ENCODE measurements at regions of chr4 and their contacts with region 1.

Region 1: GRCh38 chr4:48085821-48086607 is 48.0 kb downstream of the TXK start:
- DNase-seq: no peak
- H3K4me3 Mint-ChIP-seq: no peak overlapping the region
- H3K27ac Mint-ChIP-seq: no peak overlapping the region
- H3K4me1 Mint-ChIP-seq: peaks cover 5% of the 10 kb centered on the region
- H3K27me3 Mint-ChIP-seq: no peaks in the 10 kb centered on the region

Region 2: GRCh38 chr4:47686294-47686872 is 399.6 kb before region 1 on chr4:
- CTCF ChIA-PET with region 1: interaction called, 5 read pairs
- POLR2A ChIA-PET with region 1: no interaction called
- intact Hi-C with region 1: loop called (anchors 5 kb)
- DNase-seq: peak; percentile 81
- H3K4me3 Mint-ChIP-seq: no peak overlapping the region
- H3K27ac Mint-ChIP-seq: no peak overlapping the region
- H3K4me1 Mint-ChIP-seq: peaks cover 2% of the 10 kb centered on the region
- H3K27me3 Mint-ChIP-seq: peaks cover 8% of the 10 kb centered on the region

Region 3: DNA sequence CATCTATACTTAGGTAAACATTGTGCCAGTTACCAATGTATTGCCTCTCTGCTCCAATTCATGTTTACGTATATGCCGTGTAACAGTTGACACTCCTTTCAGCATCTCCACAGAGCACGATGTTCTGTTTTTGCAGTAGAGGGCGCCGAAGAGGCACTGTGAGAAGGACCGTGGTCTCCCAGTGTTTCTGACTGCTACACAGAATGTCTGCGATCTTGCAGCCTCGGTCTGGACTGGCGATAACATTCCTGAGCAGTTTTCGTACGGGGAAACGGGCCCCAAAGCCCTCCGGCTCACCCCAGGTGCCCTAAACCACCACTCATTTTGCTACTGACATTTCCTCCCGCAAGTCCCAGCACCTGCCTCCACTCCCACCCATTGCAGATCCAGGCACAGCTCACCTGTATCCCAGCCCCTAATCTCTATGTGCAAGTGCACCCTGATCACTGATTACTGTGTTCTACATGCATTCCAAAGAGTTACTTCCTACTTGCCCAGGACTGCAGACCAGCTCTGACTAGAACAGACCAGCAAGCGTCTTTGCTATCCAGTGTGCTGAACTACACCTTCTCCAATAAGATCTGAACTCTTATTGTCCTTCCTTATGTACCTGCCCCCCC is 159.3 kb before region 1 on chr4:
- CTCF ChIA-PET with region 1: interaction called, 5 read pairs
- POLR2A ChIA-PET with region 1: no interaction called
- intact Hi-C with region 1: loop called (anchors 2 kb)
- DNase-seq: peak; percentile 65
- H3K4me3 Mint-ChIP-seq: no peak overlapping the region
- H3K27ac Mint-ChIP-seq: no peak overlapping the region
- H3K4me1 Mint-ChIP-seq: peaks cover 6% of the 10 kb centered on the region
- H3K27me3 Mint-ChIP-seq: peaks cover 13% of the 10 kb centered on the region

Region 4: DNA sequence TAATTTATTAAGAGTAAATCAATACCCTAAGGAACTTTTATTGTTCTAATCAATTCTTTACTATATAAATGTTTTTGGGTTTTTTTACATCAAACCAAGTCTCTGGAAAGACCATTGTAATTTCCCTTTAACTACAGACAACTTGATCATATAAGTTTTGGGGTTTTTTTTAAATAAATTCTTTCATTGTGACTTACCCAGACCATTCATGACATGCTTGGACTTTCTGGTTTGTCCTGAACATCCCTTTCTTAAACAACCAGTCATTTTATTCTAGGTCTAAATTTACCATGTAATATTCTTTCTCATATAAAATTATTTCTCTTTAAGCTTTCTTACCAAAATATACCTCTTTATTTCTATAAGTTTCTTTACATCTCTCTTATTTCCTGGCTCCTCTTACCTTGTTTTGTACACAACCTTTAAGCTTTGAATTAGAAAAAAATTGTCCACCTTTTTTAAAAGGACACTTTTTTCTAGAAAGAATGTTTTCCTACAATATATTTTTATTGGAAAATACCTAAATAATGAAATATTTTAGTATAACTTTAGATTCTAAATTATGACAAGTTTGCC is 77.9 kb before region 1 on chr4:
- CTCF ChIA-PET with region 1: interaction called, 81 read pairs
- POLR2A ChIA-PET with region 1: no interaction called
- intact Hi-C with region 1: loop called (anchors 1 kb)
- DNase-seq: no peak
- H3K4me3 Mint-ChIP-seq: no peak overlapping the region
- H3K27ac Mint-ChIP-seq: no peak overlapping the region
- H3K4me1 Mint-ChIP-seq: no peaks in the 10 kb centered on the region
- H3K27me3 Mint-ChIP-seq: peaks cover 15% of the 10 kb centered on the region

Region 5: DNA sequence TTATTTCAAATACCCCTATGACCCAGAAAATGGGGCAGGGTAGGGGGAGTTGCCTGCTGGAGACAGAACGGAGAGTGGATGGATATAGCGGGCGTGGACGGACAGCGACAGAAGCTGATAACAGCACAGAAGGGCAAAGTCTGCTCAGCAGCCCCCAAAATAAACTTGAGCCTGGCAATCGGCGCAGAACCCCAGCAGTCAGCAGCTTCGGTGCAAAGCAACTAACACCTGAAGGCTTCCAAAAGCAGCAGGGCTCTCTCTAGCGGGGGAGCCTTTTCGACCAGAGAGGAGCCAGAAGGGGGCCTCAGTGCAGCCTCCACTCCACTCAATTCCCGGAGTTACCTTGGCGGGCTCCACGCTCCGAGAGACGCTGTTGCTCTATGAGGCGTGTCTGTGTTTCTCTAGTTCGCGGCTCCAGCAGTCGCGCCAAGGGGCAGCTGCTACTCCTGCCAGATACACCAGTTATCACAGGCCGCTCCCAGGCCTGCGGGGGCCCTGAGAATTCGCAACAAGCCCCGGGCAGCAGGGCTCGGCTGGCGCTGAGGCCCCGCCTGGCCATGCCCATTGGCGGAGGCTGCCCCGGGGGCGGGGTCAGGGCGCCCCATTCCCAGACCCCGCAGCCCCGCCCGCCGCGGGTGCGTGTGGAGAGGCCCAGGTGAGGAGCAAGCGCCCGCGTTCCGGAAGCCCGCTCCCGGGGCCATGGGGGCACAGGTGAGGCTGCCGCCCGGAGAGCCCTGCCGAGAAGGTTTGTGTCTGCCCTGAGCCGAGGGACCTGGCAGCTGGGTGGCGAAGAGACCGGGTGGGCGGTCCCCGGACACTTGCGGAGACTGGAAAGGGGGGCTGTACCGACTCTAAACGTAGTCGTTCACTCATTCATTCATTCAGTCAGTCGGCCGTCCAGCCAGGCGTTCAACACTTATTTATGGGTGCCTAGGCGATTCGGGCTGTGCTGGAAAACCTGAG is 69.6 kb before region 1 on chr4 and contains the starts of genes CNGA1 and NIPAL1:
- CTCF ChIA-PET with region 1: interaction called, 12 read pairs
- POLR2A ChIA-PET with region 1: no interaction called
- intact Hi-C with region 1: loop called (anchors 5 kb)
- DNase-seq: peak; percentile 70
- H3K4me3 Mint-ChIP-seq: peak within 1 kb of the TSS; percentile 73
- H3K27ac Mint-ChIP-seq: no peak within 1 kb of the TSS
- H3K4me1 Mint-ChIP-seq: peaks cover 21% of the 10 kb centered on the region
- H3K27me3 Mint-ChIP-seq: peaks cover 25% of the 10 kb centered on the region
- total RNA-seq, gene CNGA1: 0.70 TPM in 1 of 2 experiments, not detected in the other
- total RNA-seq, gene NIPAL1: 1.3 to 1.9 TPM